Activated naive CD4-positive, alpha-beta T cell treated with anti-CD3 and anti-CD28 coated beads for 36 hours (primary cell): ENCODE measurements at regions of chr3 and their contacts with region 1.

Region 1: DNA sequence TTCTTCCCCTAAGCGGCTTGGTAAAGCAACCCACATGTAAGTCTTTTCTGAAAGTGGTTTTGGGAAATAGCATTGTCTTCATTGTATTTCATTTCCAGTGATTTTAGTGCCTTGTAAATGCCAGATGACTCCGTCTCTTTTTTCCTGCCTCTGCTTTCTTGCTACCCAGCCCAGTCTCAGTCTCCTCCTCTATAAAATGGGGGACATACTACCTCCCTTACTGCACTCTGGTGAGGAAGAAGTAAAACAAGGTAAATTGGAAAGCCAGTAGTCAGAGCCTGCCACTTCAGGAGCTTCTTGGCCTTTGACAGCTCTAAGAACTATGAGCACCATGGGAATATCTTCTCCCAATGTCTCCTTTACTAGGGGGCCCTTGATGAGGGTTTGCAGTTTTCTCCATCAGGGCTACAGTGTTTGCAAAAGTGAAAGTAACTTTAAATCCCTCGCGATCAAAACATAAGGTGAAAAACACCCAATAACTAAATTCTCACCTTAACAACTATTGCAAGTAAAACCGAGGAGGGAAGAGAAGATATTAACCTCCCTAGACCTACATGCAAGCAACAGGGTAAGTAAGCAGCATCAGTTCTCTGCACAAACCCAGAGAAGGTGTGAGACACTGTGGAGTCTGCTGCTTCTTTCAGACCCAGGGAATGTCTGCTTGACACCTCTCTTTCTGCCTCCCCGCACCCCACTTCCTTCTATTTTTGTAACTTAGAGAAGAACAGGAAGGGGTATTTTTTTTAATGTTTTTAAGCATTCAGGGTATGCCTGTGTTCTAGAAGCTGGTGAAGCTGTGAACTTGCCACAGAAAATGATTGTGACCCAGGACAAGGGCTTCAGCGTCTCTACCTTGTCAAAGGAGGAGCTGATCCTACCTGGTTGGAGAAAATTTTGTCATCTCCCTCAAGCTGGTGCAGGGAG is 159.1 kb upstream of the EOMES start:
- DNase-seq: peak; percentile 41
- H3K4me3 Mint-ChIP-seq: peak overlapping the region; percentile 73
- H3K27ac Mint-ChIP-seq: peak overlapping the region; percentile 78
- H3K4me1 Mint-ChIP-seq: peaks cover 63% of the 10 kb centered on the region
- H3K27me3 Mint-ChIP-seq: no peaks in the 10 kb centered on the region

Region 2: DNA sequence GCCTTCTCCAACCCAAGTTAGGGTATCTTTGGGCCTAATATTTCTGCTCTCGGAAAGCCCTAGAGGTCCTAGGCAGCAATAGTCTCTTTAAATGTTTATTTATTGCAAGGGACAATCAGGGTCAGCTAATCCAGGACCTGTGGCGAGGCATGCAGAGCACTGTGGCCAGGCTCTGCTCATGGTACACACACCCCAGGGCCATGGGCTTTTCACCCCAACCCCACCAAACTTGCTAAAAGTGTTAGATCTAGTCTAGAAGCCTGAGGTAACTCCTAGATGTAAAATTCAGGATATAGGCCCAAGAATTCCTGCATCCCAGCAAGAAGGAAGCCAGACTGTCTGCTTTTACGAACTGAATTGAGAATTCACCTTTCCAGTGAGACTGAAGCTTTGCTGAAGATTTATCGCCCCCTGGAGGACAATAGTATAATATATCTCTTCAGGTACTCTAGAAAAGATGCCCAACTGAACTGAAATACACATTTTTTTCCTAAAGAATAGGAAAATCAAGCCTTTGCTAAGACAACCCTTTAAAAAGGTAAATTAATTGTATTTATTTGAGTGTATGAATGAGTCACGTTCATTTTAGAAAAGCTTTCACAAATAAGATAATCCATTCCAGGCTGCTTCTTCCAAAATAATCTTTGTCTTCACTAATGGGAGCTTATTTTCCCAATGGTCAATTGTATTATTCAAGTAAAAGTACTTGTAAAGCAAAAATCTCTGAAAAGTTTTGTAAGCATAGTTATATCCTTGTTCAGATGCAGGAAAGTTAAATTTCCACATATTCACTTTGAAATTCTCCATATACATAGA is 1168.8 kb before region 1 on chr3:
- CTCF ChIA-PET with region 1: no interaction called
- intact Hi-C with region 1: no loop called
- DNase-seq: no peak
- H3K4me3 Mint-ChIP-seq: no peak overlapping the region
- H3K27ac Mint-ChIP-seq: no peak overlapping the region
- H3K4me1 Mint-ChIP-seq: no peaks in the 10 kb centered on the region
- H3K27me3 Mint-ChIP-seq: peaks cover 2% of the 10 kb centered on the region

Region 3: DNA sequence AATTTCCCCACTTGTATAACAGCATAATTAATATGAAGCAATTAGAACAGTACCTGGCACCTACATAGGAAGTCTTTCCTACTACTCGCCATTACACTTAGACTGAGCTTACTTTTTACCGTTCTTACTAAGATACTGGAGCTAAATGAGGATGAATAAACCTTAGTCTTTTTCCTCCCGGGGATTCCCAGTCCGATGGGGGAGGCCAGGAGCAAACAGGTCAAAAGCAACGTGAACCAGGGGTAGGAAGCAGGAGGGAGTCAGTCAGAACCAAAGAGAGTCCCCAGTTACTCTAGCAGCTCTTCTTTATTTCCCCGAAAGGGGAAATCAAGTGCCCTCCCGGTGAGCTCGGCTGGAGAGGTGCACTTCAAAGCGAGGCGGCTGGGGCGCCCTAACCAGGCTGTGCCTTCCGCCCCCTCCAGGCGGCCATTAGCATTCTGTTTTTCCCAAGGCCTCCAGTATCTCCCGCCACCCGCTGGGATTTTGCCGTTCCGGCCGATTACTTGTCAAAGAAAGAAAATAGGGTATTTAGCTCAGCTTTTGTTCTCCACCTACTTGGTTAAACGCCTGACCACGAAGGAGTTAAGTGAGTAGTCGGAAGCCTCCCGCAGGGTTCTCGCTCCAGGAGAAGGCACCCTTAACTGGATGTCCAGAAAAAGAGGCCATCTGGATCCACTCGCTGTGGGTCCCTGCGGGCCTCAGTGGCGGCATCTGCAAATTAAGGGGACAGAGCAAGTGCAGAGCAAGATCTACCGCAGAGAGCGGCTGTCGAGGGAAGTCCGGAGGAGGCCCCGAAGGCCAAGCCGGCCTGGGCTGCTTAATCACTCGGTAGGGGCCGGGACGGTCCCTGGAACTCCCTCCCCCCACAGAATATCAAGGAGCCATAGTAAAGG is 152.8 kb before region 1 on chr3:
- CTCF ChIA-PET with region 1: no interaction called
- intact Hi-C with region 1: loop called (anchors 2 kb)
- DNase-seq: peak; percentile 39
- H3K4me3 Mint-ChIP-seq: peak overlapping the region; percentile 62
- H3K27ac Mint-ChIP-seq: no peak overlapping the region
- H3K4me1 Mint-ChIP-seq: peaks cover 41% of the 10 kb centered on the region
- H3K27me3 Mint-ChIP-seq: peaks cover 80% of the 10 kb centered on the region

Region 4: GRCh38 chr3:28348629-28349483 is 467.6 kb after region 1 on chr3 and contains the starts of genes AZI2 and ZCWPW2:
- CTCF ChIA-PET with region 1: no interaction called
- intact Hi-C with region 1: loop called (anchors 5 kb)
- DNase-seq: peak; percentile 93
- H3K4me3 Mint-ChIP-seq: peak within 1 kb of the TSS; percentile 88
- H3K27ac Mint-ChIP-seq: peak within 1 kb of the TSS; percentile 92
- H3K4me1 Mint-ChIP-seq: peaks cover 36% of the 10 kb centered on the region
- H3K27me3 Mint-ChIP-seq: no peaks in the 10 kb centered on the region
- total RNA-seq, gene AZI2: 31.5 to 39.4 TPM
- total RNA-seq, gene ZCWPW2: 0.17 TPM in 1 of 2 experiments, not detected in the other